Right cardiac atrium (tissue), 5 donors: ENCODE measurements at regions of chr22 and their contacts with region 1.

Region 1: GRCh38 chr22:28442264-28442710 is 237.4 kb downstream of the TTC28 start:
- DNase-seq: peak; percentile 81 to 93 (median 91)
- ATAC-seq: peak; percentile 93 to 95
- H3K4me3 ChIP-seq: peak overlapping the region; percentile 96
- H3K27ac ChIP-seq: peak overlapping the region; percentile 31
- H3K4me1 ChIP-seq: no peaks in the 10 kb centered on the region
- H3K27me3 ChIP-seq: no peaks in the 10 kb centered on the region

Region 2: GRCh38 chr22:28051787-28052356 is 390.4 kb before region 1 on chr22:
- intact Hi-C with region 1: loop called in 3 of 4 experiments (anchors 10 kb)
- DNase-seq: peak; percentile 71 to 91 (median 88)
- ATAC-seq: peak in 1 of 2 donors; percentile 67
- H3K4me3 ChIP-seq: no peak overlapping the region
- H3K27ac ChIP-seq: no peak overlapping the region
- H3K4me1 ChIP-seq: peaks cover 6% of the 10 kb centered on the region
- H3K27me3 ChIP-seq: no peaks in the 10 kb centered on the region

Region 3: DNA sequence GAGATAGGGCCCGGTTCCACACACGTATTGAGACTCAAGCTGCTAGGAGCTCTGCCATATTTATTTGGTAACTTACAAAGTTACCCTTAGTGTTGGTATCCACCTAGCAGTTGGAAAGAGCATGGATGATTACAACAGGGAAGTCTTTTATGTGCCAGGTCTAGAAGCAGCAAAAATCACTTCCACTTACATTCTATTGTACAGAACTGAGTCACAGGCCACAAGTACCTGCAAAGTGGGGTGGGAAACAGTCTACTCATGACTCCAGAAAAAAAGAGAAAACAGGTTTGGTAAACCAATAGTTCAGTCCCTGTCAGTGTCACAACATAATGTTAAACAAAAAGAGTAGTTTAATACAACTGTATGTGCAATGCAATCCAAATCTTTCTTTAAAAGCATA is 243.6 kb before region 1 on chr22:
- intact Hi-C with region 1: no loop called
- DNase-seq: no peak
- ATAC-seq: no peak
- H3K4me3 ChIP-seq: no peak overlapping the region
- H3K27ac ChIP-seq: no peak overlapping the region
- H3K4me1 ChIP-seq: peaks cover 3% of the 10 kb centered on the region
- H3K27me3 ChIP-seq: no peaks in the 10 kb centered on the region

Region 4: DNA sequence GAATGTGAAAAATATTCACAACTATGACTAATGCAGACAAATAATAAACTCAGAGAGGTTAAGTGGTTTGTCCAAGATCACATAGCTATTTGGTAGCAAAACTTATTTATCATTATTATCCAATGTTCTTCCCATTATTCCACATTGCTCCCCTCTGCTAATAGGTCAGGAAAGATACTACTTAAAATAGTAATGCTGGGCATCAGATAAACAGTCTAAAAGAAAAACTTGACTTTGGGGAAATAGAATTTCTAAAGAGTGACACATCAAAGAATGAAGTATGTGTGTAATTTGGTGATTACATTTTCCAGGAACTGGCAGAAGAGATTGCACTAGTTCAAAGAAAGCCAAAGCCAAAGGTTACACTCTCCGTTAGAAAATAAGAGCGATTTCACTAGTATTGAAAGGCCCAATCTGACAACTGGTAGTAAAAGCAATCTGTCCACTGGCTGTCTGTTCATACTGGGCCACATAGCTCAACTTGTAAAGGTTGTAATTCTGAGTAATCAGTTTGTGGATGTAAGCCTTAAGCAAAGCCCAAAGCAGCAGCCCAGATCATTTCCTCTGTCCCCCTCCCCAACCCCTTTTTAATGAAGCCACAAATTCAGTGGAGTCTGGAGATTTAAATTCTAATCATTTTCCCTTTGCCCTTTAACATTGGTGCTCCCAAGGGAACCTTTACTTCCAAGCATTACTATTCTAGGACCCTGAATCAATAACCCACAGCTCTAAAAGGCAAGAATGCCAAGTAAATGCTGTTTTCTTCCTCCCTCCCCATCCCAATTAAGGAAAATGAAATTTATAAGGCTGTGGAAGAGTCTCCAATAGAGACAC is 46.1 kb before region 1 on chr22:
- intact Hi-C with region 1: no loop called
- DNase-seq: no peak
- ATAC-seq: peak in 1 of 2 donors; percentile 80
- H3K4me3 ChIP-seq: no peak overlapping the region
- H3K27ac ChIP-seq: no peak overlapping the region
- H3K4me1 ChIP-seq: no peaks in the 10 kb centered on the region
- H3K27me3 ChIP-seq: no peaks in the 10 kb centered on the region

Region 5: DNA sequence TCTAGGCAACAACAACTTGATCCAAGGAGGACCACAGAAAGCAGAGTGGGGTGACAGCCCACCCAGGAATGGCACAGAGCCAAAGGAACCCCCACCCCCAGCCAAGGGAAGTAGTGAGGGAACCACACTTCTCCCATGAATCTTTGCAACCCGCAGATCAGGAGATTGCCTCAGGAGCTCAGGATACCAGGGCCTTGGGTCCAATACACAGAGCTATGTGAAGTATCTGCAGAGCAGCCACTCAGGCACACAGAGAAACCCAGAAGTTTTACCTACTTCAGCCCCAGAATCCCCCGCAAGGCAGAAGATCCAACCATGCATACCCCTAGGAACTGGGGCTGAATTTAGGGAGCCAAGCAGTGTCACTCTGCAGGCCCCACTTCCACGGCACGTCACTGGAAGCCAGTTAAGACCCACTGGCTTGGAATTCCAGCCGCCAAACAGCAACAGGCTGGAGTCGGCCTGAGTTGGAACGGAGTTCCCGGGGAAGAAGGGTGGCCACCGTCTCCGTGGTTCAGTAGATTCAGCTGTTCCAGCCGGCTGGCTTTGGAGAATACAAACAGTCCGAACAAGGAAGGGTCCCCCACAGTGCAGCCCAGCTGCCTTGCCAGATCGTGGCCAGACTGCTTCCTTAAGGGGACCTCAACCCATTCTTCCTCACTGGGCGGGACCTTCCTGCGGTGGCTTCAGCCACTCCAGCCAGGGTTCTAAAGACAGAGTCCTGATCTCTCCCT is 63.3 kb after region 1 on chr22:
- intact Hi-C with region 1: no loop called
- DNase-seq: peak in 2 of 3 donors; percentile 19 to 47
- ATAC-seq: peak in 1 of 2 donors; percentile 61
- H3K4me3 ChIP-seq: no peak overlapping the region
- H3K27ac ChIP-seq: no peak overlapping the region
- H3K4me1 ChIP-seq: no peaks in the 10 kb centered on the region
- H3K27me3 ChIP-seq: no peaks in the 10 kb centered on the region